OCI-LY7 (cell line): ENCODE measurements at regions of chr7 and their contacts with region 1.

Region 1: DNA sequence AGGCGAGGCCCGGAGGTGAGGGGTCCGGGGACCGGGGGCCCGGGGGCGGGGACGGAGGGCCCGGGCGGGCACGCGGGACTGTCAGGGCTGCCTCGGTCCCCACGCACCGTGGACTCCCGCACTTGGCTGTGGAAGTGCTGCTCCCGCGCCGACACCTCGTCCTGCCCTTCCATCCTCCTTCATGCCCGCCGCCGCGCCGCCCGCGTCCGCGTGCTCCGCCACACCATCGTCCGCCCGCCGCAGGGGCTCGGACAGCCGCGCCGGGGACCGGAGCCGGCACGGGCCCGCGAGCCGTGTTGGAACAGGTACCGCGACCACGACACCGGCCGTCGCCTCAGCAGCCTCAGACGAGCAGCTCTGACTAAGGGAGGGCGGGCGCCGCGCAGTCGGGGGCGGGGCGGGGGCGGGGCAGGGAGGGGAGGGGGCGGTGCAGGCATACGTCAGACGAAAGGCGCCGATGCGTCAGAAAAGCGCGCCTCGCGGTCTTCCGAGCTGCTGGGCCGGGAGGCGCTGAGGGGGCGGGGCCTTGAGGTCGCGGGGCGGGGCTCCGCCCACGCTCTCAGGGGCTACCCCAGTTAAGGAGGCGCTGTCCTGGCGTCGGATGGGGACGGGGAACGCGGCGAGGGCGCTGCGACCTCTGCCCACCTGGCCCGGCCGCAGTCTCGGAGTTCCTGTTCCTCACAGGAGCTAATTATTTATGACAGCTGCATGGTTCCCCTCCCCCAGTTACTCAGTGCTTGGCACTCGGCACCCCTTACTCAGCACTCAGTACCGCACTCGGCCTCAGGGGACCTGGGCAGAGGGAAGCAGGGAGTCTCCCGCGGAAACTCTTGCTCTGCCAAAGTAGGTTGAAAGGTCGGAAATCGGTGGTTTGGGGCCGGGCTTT is at the start of gene LMBR1:
- DNase-seq: peak; percentile 97
- H3K4me3 ChIP-seq: peak within 1 kb of the TSS; percentile 81
- H3K27ac ChIP-seq: peak within 1 kb of the TSS; percentile 82
- H3K4me1 ChIP-seq: peaks cover 30% of the 10 kb centered on the region
- CTCF ChIP-seq: peak; percentile 47
- total RNA-seq, gene LMBR1: 91.1 and 136 TPM in 2 replicates

Region 2: DNA sequence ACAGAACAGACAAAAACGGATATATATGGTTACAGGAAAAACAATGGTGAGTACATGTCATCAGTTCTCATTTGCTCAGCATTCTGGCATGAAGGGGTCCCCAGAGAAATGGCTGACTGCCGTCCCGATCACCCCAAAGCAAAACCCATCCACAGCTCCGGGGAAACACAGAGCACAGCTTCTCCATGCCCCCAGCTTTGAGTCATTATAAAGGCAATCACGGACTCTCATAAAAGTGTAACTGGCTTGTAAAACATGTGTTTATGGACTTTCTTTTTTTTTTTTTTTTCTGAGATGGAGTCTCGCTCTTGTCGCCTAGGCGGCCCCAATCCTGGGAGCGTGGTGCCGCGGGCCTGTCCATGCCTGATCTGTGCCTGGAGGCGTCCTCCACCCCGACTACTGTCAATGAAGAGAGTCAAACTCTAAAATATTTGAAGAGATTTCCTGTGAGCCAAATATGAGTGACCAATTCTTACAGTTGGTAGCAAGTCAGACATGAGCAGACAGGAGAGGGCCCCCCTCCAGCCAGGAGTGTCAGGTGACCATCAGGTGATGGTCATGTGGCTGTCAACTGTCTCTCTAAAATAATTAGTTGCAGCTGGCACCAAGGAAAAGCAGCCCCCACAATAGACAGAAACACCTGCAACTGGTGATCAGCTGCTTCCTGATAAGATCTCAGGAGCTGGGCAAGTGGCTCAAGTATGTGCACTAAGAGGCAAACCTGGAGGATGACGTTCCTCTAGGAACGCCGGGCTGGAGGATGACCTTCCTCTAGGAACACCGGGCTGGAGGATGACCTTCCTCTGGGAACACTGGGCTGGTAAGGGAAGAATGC is 34.7 kb after region 1 on chr7:
- CTCF ChIA-PET with region 1: no interaction called
- POLR2A ChIA-PET with region 1: interaction called, 5 read pairs
- intact Hi-C with region 1: loop called (anchors 1 kb)
- DNase-seq: peak; percentile 86
- H3K4me3 ChIP-seq: peak overlapping the region; percentile 21
- H3K27ac ChIP-seq: peak overlapping the region; percentile 74
- H3K4me1 ChIP-seq: peaks cover 56% of the 10 kb centered on the region
- CTCF ChIP-seq: no peak

Region 3: GRCh38 chr7:157138424-157139110 is 245.5 kb after region 1 on chr7 and contains the start of gene UBE3C:
- CTCF ChIA-PET with region 1: no interaction called
- POLR2A ChIA-PET with region 1: no interaction called
- intact Hi-C with region 1: loop called (anchors 1 kb)
- DNase-seq: peak; percentile 93
- H3K4me3 ChIP-seq: peak within 1 kb of the TSS; percentile 99
- H3K27ac ChIP-seq: peak within 1 kb of the TSS; percentile 84
- H3K4me1 ChIP-seq: peaks cover 31% of the 10 kb centered on the region
- CTCF ChIP-seq: no peak
- total RNA-seq, gene UBE3C: 51.5 and 60.4 TPM in 2 replicates

Region 4: DNA sequence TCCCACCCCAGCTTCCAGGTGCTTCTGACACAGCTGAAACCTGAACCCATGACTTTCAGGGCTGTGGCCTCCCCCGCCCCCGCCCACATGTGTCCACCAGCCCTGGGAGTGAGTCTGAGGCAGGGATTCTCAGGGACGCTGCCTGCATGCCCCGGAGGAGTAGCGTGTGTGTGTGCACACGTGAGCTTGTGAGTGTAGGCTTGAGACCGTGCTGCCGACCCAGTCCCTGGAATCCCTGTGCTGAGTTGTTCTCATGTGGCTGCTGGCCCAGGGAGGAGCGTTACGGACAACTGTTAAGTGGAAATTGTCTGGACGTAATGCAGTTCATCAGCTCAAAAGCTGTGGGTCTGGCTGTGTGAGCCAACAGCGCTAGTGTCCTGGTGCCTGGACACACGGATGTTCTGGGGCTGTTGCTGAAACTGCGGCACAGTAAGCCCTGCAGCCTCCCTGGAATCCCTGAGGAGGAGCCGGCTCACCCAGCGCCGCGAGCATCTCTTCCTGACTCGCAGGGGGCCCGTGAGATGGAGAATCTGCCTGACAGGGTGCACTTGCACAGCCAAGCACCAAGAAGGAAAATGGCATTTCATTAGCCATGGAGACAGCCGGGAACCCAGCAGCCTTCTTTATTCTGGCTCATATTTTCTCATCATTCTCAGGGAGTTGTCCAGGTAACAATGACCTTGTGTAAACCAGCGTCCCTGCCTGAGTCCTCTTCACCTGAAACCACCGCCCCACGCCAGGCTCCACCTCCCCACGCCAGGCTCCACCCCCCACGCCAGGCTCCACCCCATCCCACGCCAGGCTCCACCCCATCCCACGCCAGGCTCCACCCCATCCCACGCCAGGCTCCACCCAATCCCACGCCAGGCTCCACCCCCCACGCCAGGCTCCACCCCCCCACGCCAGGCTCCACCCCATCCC is 1090.7 kb after region 1 on chr7:
- CTCF ChIA-PET with region 1: no interaction called
- POLR2A ChIA-PET with region 1: no interaction called
- intact Hi-C with region 1: no loop called
- DNase-seq: no peak
- H3K4me3 ChIP-seq: no peak overlapping the region
- H3K27ac ChIP-seq: no peak overlapping the region
- H3K4me1 ChIP-seq: no peaks in the 10 kb centered on the region
- CTCF ChIP-seq: no peak